Dorsolateral prefrontal cortex (tissue), 120 donors: ENCODE measurements at regions of chr1 and their contacts with region 1.

Region 1: DNA sequence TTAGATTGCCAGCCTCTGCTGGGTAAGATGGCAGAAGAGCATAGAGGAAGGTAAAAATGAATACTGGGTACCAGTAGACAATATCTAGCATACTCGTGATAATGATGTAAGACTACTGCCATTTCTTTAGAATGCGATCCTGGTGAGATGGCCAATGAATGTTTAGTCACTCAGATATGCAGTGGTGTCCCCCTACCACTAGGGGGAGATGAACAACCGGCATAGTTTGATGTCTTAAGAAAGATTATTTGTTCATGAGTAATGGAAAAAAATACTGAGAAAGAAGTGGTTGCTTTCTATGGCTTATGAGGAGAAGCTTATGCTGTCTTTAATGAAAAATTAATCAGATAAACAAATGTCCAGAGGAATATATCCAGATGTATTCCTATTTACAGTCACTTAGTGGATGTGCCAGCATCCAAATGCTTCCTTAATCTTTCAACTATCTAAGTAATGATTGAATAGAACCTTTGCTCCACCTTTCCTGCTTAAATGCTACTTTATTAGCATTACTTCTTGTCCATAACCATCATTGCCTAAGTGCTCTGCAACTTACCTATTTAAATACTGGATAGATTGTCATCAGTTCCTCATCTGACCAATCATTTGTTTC is 256.6 kb downstream of the ST6GALNAC3 start:
- DNase-seq: peak in 4 of 10 donors; percentile 11 to 70 (median 36)
- H3K4me3 ChIP-seq: no peak overlapping the region
- H3K27ac ChIP-seq: no peak overlapping the region
- H3K27me3 ChIP-seq: no peaks in the 10 kb centered on the region
- CTCF ChIP-seq: peak; percentile 81 to 99 (median 93)

Region 2: GRCh38 chr1:75985827-75986226 is 345.3 kb before region 1 on chr1:
- intact Hi-C with region 1: loop called in 1 of 2 experiments (anchors 10 kb)
- DNase-seq: no peak
- H3K4me3 ChIP-seq: no peak overlapping the region
- H3K27ac ChIP-seq: no peak overlapping the region
- H3K27me3 ChIP-seq: peaks cover 0 to 10% (median 0%) of the 10 kb centered on the region in 45 donors
- CTCF ChIP-seq: no peak

Region 3: GRCh38 chr1:76381450-76382097 is 50.5 kb after region 1 on chr1:
- intact Hi-C with region 1: no loop called
- DNase-seq: no peak
- H3K4me3 ChIP-seq: no peak overlapping the region
- H3K27ac ChIP-seq: no peak overlapping the region
- H3K27me3 ChIP-seq: no peaks in the 10 kb centered on the region
- CTCF ChIP-seq: no peak

Region 4: DNA sequence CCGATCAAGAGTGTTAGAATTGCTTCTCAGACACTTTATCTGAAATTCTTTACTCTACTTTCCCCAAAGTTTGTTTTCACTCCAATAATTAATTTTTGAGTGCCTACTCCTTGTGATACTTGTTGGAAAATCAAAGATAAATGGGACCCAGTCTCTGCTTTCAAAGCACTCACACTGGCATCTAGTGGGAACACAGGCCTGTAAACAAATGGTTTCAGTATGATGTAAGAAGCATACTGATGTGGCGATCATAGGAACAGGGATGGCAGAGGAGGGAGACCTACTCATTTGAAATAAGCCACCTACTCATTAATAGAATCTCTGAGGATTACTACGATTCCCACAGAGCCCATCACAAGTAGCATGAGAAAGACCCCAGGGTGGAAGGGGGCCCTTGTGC is 262.5 kb after region 1 on chr1:
- intact Hi-C with region 1: loop called in 1 of 2 experiments (anchors 10 kb)
- DNase-seq: no peak
- H3K4me3 ChIP-seq: no peak overlapping the region
- H3K27ac ChIP-seq: no peak overlapping the region
- H3K27me3 ChIP-seq: no peaks in the 10 kb centered on the region
- CTCF ChIP-seq: peak in 1 of 56 donors; percentile 4